HEK293T (cell line): ENCODE measurements at regions of chr15 and their contacts with region 1.

Region 1: GRCh38 chr15:23039151-23039916 is at the start of gene TUBGCP5:
- DNase-seq: peak; percentile 92

Region 2: DNA sequence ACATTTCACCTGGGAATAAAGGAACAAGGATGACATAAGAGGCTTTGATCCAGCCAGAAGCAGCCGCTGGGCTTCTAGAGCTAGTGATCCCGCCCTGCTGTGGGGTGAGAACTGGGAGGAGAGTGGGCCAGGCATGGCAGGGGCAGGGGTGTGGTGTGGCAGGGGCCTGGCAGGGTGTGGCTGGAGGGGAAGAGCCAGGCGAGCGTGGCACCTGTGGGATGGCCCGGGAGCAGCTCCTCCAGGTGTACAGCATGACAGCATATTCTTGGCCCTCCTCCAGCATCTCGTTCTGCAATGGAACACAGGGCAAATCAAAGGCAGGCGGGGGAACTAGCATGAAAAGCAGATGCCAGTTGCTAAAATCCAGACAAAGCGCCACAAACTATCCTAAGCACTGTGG is 94.7 kb before region 1 on chr15:
- CTCF ChIA-PET with region 1: no interaction called
- POLR2A ChIA-PET with region 1: no interaction called
- DNase-seq: no peak

Region 3: GRCh38 chr15:23026218-23026617 is 13.1 kb before region 1 on chr15:
- CTCF ChIA-PET with region 1: interaction called, 10 read pairs
- POLR2A ChIA-PET with region 1: interaction called, 9 read pairs
- DNase-seq: no peak

Region 4: DNA sequence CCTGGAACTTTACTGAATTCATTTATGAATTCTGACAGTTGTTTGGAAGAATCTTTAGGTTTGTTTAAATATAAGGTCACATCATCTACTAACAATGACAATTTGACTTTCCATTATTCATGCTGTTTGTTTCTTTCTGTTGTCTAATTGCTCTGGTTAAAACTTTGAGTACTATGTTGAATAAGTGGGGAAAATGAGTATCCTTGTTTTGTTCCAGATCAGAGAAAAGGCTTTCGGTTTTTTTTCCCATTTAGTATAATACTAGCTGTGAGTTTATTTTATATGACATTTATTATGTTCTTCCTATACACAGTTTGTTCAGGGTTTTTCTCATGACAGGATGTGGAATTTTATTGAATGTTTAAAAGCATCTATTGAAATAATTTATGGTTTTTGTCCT is 11.4 kb after region 1 on chr15:
- CTCF ChIA-PET with region 1: no interaction called
- POLR2A ChIA-PET with region 1: interaction called, 10 read pairs
- DNase-seq: no peak

Region 5: GRCh38 chr15:23073890-23074646 is 34.7 kb after region 1 on chr15:
- CTCF ChIA-PET with region 1: interaction called, 6 read pairs
- POLR2A ChIA-PET with region 1: interaction called, 11 read pairs
- DNase-seq: no peak